ENCODE measurements at regions of chr1 and their contacts with region 1.

Region 1: GRCh38 chr1:39738622-39739366 is at the start of gene PPIE:
- DNase-seq: peak; percentile 96
- H3K4me3 Mint-ChIP-seq: peak within 1 kb of the TSS; percentile 97
- H3K27ac Mint-ChIP-seq: peak within 1 kb of the TSS; percentile 93
- H3K4me1 Mint-ChIP-seq: peaks cover 40% of the 10 kb centered on the region
- H3K27me3 Mint-ChIP-seq: peaks cover 2% of the 10 kb centered on the region
- total RNA-seq, gene PPIE: 71.3 and 76.7 TPM in 2 replicates

Region 2: DNA sequence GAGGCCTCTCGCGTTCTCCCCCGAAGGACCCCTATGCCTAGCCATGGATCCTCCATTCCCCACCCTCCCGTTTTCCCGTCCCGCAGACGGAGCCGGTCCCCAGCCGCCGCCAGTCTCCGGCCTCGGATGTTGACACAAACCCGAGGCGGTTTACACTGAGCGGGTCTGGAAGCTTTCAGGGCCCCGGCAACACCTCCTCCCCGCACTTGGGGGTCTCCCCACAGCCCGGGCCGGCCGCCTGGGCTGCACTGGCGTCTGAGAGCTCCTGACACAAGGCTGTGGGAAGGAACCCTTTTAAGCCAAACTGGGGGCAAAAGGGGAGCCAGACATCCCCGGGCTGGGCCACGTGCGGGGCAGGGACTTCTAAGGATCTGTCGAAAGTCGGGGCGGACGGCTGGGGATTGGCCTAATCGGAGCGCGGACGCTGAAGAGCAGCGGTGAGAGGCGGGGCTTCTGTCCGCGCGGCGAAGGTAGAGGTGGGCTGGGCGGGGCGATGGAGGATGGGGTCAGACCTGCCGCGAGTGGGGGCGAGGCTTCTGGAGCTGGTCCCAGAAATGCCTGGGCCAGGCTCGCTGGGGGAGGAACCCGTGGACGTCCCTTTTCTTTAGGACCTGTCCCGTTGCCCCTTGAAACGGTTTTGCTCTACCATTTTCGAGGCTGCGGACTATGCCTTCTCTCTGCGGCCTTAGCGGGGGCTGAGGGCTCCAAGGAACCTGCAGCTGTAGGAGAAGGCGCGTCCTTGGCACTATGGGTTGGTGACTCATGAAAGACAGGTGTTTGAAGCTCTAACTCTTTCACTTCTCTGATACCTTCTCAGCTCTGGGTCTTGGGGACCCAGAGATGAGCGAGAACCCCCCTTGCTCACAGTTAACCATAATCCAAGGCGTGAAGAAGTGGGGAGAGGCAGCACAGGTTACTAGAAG is 46.4 kb before region 1 on chr1:
- intact Hi-C with region 1: no loop called
- DNase-seq: peak; percentile 66
- H3K4me3 Mint-ChIP-seq: peak overlapping the region; percentile 87
- H3K27ac Mint-ChIP-seq: no peak overlapping the region
- H3K4me1 Mint-ChIP-seq: peaks cover 27% of the 10 kb centered on the region
- H3K27me3 Mint-ChIP-seq: peaks cover 56% of the 10 kb centered on the region

Region 3: DNA sequence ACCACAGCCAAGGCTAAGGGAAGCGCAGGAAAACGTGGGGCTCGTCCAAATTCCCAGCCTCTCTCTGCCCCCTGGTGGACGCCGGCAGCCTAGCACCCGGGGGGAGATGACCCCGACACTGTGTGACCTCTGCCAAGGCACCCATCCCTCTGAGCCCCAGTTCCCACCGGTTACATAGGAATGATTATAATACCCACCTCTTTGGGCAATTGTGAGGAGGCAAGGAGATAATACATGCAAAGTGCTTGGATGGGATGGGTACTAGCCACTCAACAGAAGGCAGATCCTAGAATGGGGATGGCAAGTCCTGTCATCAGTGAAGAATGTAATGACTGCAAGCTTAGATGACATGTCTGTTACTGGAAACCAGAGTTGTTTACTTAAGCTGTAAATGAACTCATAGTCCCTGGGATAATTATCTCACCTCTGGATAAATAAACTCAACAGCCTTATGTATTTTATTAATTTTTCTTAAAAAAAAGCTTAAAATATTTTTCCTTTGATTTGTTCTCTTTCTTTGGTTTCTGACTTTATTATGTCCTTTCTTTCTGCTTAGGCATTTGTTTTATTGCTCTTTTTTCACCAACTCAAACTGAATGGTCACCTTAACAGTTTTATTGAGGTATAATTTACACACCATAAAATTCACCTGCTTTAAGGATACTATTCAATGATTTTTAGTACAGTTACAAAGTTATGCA is 61.1 kb after region 1 on chr1:
- intact Hi-C with region 1: loop called (anchors 10 kb)
- DNase-seq: peak; percentile 89
- H3K4me3 Mint-ChIP-seq: peak overlapping the region; percentile 67
- H3K27ac Mint-ChIP-seq: peak overlapping the region; percentile 76
- H3K4me1 Mint-ChIP-seq: peaks cover 11% of the 10 kb centered on the region
- H3K27me3 Mint-ChIP-seq: peaks cover 10% of the 10 kb centered on the region